ENCODE measurements at regions of chr6 and their contacts with region 1.

Region 1: DNA sequence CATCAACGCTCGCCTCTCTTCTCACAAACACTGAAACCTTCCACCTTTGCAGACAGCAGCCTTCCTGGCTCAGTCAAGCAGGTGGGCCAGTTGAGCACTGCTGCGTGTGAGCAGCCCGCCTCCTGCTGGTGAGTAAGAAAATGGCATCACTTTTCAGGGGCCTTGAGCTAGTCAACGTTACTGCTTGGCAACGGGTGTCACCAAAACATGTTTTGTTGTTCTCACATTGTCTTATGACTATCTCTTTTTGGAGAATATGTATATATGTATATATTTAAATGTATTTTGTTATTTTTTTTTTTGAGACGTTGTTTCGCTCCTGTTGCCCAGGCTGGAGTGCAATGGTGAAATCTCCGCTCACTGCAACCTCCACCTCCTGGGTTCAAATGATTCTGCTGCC is 97.0 kb upstream of the AGPAT4 start:
- DNase-seq: peak; percentile 41 to 73
- H3K4me3 ChIP-seq: no peak overlapping the region
- H3K27ac ChIP-seq: no peak overlapping the region
- H3K4me1 ChIP-seq: no peaks in the 10 kb centered on the region; a peak in 2 of 7 replicates
- H3K27me3 ChIP-seq: no peaks in the 10 kb centered on the region
- CTCF ChIP-seq: peak; percentile 91 to 97 (median 93)
- EP300 ChIP-seq: no peak
- POLR2A ChIP-seq: no peak
- RAD21 ChIP-seq: peak; percentile 97 to 99

Region 2: DNA sequence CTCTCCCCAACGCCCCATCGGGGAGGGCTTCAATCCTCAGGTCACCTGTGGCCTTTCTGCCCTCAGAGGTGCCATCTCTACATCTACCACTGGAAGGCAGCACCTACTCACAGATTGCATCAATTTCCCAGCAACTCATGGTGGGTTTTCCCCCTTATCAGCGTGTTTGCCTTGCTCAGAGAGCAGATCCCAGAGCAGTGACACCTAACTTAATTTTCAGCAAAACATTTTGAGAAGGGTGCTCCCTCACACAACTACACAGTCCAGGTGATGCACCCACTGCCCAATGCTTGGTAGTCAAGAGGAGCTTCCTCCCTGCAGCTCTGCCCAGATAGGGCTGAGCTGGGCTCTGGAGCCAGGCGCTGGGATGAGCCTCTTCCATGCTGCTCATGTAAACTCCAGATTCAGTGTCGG is 620.6 kb before region 1 on chr6:
- CTCF ChIA-PET with region 1: interaction called, 17 read pairs
- POLR2A ChIA-PET with region 1: no interaction called
- DNase-seq: peak; percentile 38 to 76
- H3K4me3 ChIP-seq: peak overlapping the region in 2 of 4 experiments; percentile 2 to 44; a peak in 2 of 8 replicates
- H3K27ac ChIP-seq: no peak overlapping the region
- H3K4me1 ChIP-seq: no peaks in the 10 kb centered on the region
- H3K27me3 ChIP-seq: no peaks in the 10 kb centered on the region
- CTCF ChIP-seq: peak; percentile 78 to 99 (median 91)
- EP300 ChIP-seq: no peak
- POLR2A ChIP-seq: no peak
- RAD21 ChIP-seq: peak; percentile 99

Region 3: DNA sequence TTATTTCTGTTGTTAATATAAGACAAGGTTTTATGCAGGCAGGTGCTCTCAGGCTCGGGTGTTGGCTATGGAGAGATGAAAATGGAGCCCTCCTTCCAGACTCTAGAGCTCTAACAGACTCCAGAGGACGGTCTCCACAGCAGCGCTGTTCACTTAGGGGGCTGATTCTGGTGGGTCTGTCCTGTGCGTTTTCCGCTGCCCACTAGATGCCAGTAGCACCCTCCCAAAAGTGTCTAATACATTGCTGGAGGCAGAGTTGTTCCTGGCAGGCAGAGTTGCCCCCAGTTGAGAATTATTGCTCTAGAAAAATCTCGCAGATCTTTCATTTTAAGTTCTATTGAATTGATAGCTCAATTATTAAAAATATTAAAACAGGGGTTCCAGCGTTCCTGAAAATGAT is 269.4 kb before region 1 on chr6:
- CTCF ChIA-PET with region 1: interaction called, 38 read pairs
- POLR2A ChIA-PET with region 1: no interaction called
- DNase-seq: no peak
- H3K4me3 ChIP-seq: no peak overlapping the region
- H3K27ac ChIP-seq: no peak overlapping the region
- H3K4me1 ChIP-seq: no peaks in the 10 kb centered on the region
- H3K27me3 ChIP-seq: no peaks in the 10 kb centered on the region
- CTCF ChIP-seq: peak; percentile 44 to 54 (median 47)
- EP300 ChIP-seq: no peak
- POLR2A ChIP-seq: no peak
- RAD21 ChIP-seq: peak; percentile 60 to 73

Region 4: DNA sequence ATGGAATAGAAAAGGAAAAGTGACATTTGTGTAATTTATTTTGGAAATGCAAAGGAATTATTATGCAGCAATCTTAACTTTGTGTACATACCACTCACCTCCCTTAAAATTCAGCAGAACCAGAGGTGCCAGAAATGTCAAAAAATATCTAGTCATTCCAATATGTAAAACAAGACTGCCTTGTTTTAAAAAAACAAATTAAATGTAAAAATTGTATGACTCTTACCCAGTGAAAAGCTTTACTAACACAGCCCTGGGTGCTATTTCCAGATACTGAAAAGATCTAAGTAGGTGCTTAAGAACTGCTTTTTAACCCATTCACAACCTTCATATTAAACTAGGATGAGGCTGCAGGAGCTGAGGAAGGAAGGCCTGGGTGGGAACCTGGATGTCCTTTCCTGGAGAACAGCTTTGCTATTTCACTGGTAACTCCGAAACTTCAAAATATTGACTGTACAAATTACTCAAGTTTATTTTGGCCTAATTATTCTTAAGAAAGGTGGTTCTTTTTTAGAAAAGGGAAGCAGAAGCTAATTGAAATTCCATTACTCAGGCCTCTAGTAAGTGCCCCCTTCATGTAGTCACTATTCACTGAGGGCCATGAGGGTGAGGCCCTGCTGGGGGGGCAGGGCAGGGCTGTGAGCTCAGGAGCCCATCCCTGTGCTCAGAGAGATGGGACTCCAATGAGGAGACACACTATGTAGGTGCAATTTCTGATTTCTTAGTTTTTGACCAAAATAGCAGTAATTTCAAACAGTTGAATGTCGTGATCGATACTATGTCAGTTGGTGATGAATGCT is 239.7 kb before region 1 on chr6:
- CTCF ChIA-PET with region 1: interaction called, 15 read pairs
- POLR2A ChIA-PET with region 1: no interaction called
- DNase-seq: no peak
- H3K4me3 ChIP-seq: no peak overlapping the region
- H3K27ac ChIP-seq: no peak overlapping the region
- H3K4me1 ChIP-seq: no peaks in the 10 kb centered on the region
- H3K27me3 ChIP-seq: no peaks in the 10 kb centered on the region
- CTCF ChIP-seq: no peak
- EP300 ChIP-seq: no peak
- POLR2A ChIP-seq: no peak
- RAD21 ChIP-seq: no peak

Region 5: DNA sequence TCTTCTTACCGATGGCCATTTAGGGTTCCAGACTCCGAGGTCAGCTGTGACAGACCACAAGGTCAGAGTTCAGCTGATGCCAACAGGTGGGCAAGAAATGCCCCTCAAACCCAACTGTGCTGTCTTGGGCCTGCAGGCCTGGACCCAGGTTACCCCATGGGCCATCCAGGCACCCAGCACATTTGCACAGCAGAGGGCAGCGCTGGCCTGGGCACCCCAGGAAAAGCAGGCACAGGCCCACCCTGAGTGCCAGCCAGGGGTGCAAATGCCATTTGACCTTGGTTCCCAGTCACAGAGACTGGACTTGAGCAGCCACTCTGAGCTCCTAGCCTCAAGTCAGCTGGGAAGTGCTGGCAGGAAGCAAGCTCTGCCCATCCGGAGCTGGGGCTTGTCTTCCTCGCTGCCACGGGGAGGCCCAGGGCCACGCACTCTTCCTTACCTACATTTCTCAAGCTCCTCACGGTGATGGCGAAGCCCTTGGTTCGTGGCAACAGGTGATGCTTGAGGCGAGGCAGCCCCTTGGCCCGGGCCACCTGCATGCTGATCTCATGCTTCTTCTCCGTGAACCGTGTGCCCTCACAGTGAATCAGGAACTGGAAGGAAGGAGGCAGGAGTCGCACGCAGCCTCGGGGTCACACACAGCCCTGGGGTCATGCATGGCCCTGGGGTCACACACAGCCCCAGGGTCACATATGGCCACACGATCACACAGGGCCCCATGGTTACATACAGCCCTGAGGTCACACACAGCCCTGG is 217.8 kb before region 1 on chr6:
- CTCF ChIA-PET with region 1: interaction called, 40 read pairs
- POLR2A ChIA-PET with region 1: no interaction called
- DNase-seq: no peak
- H3K4me3 ChIP-seq: no peak overlapping the region
- H3K27ac ChIP-seq: no peak overlapping the region
- H3K4me1 ChIP-seq: no peaks in the 10 kb centered on the region
- H3K27me3 ChIP-seq: no peaks in the 10 kb centered on the region
- CTCF ChIP-seq: peak; percentile 38 to 51 (median 50); a peak in 3 of 4 replicates
- EP300 ChIP-seq: no peak
- POLR2A ChIP-seq: no peak
- RAD21 ChIP-seq: peak; percentile 68 to 72

Region 6: GRCh38 chr6:161218222-161218621 is 152.7 kb before region 1 on chr6:
- CTCF ChIA-PET with region 1: interaction called, 11 read pairs
- POLR2A ChIA-PET with region 1: no interaction called
- DNase-seq: no peak
- H3K4me3 ChIP-seq: no peak overlapping the region
- H3K27ac ChIP-seq: no peak overlapping the region
- H3K4me1 ChIP-seq: no peaks in the 10 kb centered on the region; a peak in 1 of 7 replicates
- H3K27me3 ChIP-seq: no peaks in the 10 kb centered on the region
- CTCF ChIP-seq: peak in 1 of 3 experiments; percentile 10; a peak in 1 of 4 replicates
- EP300 ChIP-seq: no peak
- POLR2A ChIP-seq: no peak
- RAD21 ChIP-seq: peak; percentile 1 to 11; a peak in 1 of 4 replicates

Region 7: DNA sequence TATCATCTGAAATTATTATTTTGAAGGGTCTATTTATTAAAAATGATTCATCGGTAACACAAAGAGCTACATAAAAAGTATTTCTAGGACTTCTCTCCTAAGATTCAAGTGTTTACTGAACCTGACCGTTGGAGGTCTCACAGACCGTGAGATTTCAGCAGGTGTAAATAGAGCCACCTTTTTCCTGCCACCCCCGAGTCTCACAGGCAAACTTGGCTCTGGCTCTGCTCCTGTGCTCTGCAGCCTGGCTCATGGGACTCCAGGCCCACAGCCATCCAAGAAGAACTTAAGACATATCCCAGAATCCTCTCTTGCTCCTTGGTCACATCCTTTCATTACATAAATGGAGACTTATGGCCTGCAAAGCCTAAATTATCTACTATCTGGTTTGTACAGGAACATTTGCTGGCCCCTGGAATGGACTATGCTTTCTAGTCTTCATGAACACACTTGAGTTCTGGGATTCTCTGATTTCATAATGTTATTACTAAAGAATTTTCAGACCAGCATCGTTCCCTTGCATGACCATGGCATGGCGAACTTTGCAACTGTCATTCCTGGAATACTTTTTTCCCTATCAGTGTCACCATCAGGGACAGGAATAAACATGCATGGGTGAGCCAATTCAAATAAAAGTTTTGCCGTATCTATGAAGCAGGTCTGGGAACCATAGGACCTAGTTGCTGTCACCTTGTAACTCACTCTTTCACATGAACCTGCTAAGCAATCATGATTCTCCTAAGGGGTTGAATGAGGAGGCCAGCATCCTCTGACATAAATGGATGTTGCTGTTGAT is 29.0 kb before region 1 on chr6:
- CTCF ChIA-PET with region 1: no interaction called
- POLR2A ChIA-PET with region 1: no interaction called
- DNase-seq: no peak
- H3K4me3 ChIP-seq: no peak overlapping the region
- H3K27ac ChIP-seq: no peak overlapping the region
- H3K4me1 ChIP-seq: no peaks in the 10 kb centered on the region
- H3K27me3 ChIP-seq: no peaks in the 10 kb centered on the region
- CTCF ChIP-seq: no peak
- EP300 ChIP-seq: no peak
- POLR2A ChIP-seq: no peak
- RAD21 ChIP-seq: no peak

Region 8: DNA sequence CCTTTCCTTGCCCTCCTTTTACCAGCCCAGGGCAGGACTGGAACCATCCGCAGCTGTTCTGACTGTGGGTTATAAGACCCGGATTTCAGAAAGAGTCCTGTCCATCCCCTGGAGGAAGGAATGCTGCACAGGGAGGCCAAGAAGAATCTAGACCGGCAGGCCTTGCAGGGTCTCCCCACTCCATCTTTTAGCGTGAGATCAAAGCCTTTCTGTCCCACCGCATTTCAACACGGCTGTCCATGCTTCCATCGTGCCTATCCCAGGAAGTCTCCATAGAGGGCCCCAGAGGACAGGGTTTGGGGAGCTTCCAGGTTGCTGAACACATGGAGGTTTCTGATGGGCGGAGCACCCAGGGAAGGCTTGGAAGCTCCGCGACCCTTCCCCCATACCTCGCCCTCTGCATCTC is 17.7 kb before region 1 on chr6:
- CTCF ChIA-PET with region 1: interaction called, 113 read pairs
- POLR2A ChIA-PET with region 1: no interaction called
- DNase-seq: peak; percentile 66 to 78
- H3K4me3 ChIP-seq: no peak overlapping the region
- H3K27ac ChIP-seq: no peak overlapping the region
- H3K4me1 ChIP-seq: no peaks in the 10 kb centered on the region; a peak in 1 of 7 replicates
- H3K27me3 ChIP-seq: no peaks in the 10 kb centered on the region
- CTCF ChIP-seq: peak; percentile 55 to 78 (median 77)
- EP300 ChIP-seq: 0 out of 3 replicates have a peak, but pooled peaks of 1 of the 2 experiments have one; percentile 38
- POLR2A ChIP-seq: no peak
- RAD21 ChIP-seq: peak; percentile 81 to 91

Measured in H1 (cell line).